ENCODE measurements at regions of chr5 and their contacts with region 1.

Region 1: GRCh38 chr5:157390551-157391297 is 69.3 kb upstream of the NIPAL4 start:
- DNase-seq: peak; percentile 98 to 99
- ATAC-seq: peak; percentile 95 to 96
- H3K4me3 ChIP-seq: no peak overlapping the region
- H3K27ac ChIP-seq: peak overlapping the region; percentile 81 to 93
- H3K4me1 ChIP-seq: peaks cover 58% of the 10 kb centered on the region
- CTCF ChIP-seq: no peak
- EP300 ChIP-seq: peak; percentile 67 to 75; a peak in 1 of 5 replicates
- POLR2A ChIP-seq: no peak
- RAD21 ChIP-seq: peak in 1 of 2 experiments; percentile 24; a peak in 1 of 5 replicates

Region 2: GRCh38 chr5:157046041-157046440 is 344.7 kb before region 1 on chr5:
- CTCF ChIA-PET with region 1: no interaction called
- POLR2A ChIA-PET with region 1: no interaction called
- DNase-seq: peak; percentile 60 to 92
- ATAC-seq: peak; percentile 89 to 93
- H3K4me3 ChIP-seq: no peak overlapping the region
- H3K27ac ChIP-seq: peak overlapping the region; percentile 89 to 94
- H3K4me1 ChIP-seq: peaks cover 67% of the 10 kb centered on the region
- CTCF ChIP-seq: no peak
- EP300 ChIP-seq: peak; percentile 55 to 71; a peak in 3 of 5 replicates
- POLR2A ChIP-seq: no peak
- RAD21 ChIP-seq: peak; percentile 18 to 47; a peak in 3 of 5 replicates

Region 3: GRCh38 chr5:157233515-157233914 is 157.2 kb before region 1 on chr5:
- CTCF ChIA-PET with region 1: no interaction called
- POLR2A ChIA-PET with region 1: no interaction called
- DNase-seq: no peak
- ATAC-seq: no peak
- H3K4me3 ChIP-seq: no peak overlapping the region
- H3K27ac ChIP-seq: no peak overlapping the region
- H3K4me1 ChIP-seq: peaks cover 5% of the 10 kb centered on the region; the same call in 1 of the 3 replicates
- CTCF ChIP-seq: no peak
- EP300 ChIP-seq: no peak
- POLR2A ChIP-seq: no peak
- RAD21 ChIP-seq: no peak

Region 4: GRCh38 chr5:157431544-157432200 is 40.9 kb after region 1 on chr5:
- CTCF ChIA-PET with region 1: interaction called, 11 read pairs
- POLR2A ChIA-PET with region 1: no interaction called
- DNase-seq: peak; percentile 35 to 63
- ATAC-seq: peak; percentile 80 to 91; a peak in 4 of 6 replicates
- H3K4me3 ChIP-seq: no peak overlapping the region
- H3K27ac ChIP-seq: peak overlapping the region in 1 of 2 experiments; percentile 34; a peak in 1 of 6 replicates
- H3K4me1 ChIP-seq: no peaks in the 10 kb centered on the region
- CTCF ChIP-seq: peak; percentile 74
- EP300 ChIP-seq: no peak
- POLR2A ChIP-seq: no peak
- RAD21 ChIP-seq: peak; percentile 68 to 74